Activated CD4-positive, alpha-beta memory T cell treated with anti-CD3 and anti-CD28 coated beads for 36 hours (primary cell): ENCODE measurements at regions of chr19 and their contacts with region 1.

Region 1: DNA sequence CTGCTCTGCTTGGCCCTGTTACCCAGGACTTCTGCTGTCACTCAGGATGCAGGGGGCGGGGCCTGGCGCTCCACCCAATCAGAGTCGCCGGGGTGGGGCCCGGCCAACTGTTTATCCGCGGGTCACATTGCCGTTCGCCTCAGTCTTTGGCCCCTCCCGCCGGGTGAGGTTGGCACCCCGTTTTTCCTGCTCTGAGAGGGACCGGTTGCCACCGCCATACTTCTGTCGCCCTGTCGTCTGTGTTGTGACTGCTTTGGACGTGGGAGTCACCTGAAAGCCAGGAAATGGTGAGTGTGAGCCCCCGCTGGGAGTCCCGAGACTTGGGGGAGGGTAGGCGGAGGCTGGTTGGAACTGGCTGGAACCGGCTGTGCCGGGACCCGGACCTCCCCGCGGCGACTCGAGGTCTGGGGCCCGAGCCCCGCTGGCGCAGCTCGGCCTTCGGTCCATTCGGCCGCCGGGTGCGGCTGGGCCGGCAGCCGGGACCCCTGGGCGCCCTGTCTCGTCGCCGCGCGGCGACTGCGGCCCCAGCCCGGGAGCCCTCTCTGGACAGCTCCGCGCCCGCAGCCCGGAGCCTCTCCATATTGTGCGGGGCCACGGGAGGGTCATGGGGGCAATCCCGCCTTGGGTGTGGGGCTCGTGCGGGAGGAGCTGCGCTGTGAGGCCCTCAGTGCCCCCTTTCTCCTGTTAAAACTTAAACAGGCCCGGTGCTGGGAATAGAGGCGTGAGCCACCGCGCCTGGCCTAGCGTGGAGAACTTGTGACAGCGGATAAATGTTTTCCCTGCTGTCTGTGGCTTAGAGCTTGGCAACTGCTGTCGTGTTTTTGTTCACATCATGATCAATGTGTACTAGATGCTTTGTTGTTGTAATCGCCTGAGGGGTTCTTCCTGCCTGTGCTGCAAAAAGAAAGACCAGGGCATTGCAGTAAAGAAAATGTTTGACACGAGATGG is at the start of gene ZNF844:
- DNase-seq: peak; percentile 86
- H3K4me3 Mint-ChIP-seq: peak within 1 kb of the TSS; percentile 81
- H3K27ac Mint-ChIP-seq: peak within 1 kb of the TSS; percentile 54
- H3K4me1 Mint-ChIP-seq: peaks cover 10% of the 10 kb centered on the region
- H3K27me3 Mint-ChIP-seq: peaks cover 2% of the 10 kb centered on the region
- total RNA-seq, gene ZNF844: 2.5 TPM

Region 2: DNA sequence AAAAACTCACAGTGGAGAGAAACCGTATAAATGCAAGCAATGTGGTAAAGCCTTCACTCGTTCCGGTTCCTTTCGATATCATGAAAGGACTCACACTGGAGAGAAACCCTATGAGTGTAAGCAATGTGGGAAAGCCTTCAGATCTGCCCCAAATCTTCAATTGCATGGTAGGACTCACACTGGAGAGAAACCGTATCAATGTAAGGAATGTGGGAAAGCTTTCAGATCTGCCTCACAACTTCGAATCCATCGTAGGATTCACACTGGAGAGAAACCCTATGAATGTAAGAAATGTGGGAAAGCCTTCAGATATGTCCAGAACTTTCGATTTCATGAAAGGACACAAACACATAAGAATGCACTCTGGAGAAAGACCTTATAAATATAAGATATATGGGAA is 196.7 kb before region 1 on chr19:
- CTCF ChIA-PET with region 1: no interaction called
- POLR2A ChIA-PET with region 1: no interaction called
- intact Hi-C with region 1: no loop called
- DNase-seq: no peak
- H3K4me3 Mint-ChIP-seq: no peak overlapping the region
- H3K27ac Mint-ChIP-seq: no peak overlapping the region
- H3K4me1 Mint-ChIP-seq: no peaks in the 10 kb centered on the region
- H3K27me3 Mint-ChIP-seq: no peaks in the 10 kb centered on the region

Region 3: GRCh38 chr19:11881151-11881800 is 183.6 kb before region 1 on chr19:
- CTCF ChIA-PET with region 1: interaction called, 15 read pairs
- POLR2A ChIA-PET with region 1: no interaction called
- intact Hi-C with region 1: no loop called
- DNase-seq: peak; percentile 69
- H3K4me3 Mint-ChIP-seq: no peak overlapping the region
- H3K27ac Mint-ChIP-seq: no peak overlapping the region
- H3K4me1 Mint-ChIP-seq: no peaks in the 10 kb centered on the region
- H3K27me3 Mint-ChIP-seq: no peaks in the 10 kb centered on the region

Region 4: DNA sequence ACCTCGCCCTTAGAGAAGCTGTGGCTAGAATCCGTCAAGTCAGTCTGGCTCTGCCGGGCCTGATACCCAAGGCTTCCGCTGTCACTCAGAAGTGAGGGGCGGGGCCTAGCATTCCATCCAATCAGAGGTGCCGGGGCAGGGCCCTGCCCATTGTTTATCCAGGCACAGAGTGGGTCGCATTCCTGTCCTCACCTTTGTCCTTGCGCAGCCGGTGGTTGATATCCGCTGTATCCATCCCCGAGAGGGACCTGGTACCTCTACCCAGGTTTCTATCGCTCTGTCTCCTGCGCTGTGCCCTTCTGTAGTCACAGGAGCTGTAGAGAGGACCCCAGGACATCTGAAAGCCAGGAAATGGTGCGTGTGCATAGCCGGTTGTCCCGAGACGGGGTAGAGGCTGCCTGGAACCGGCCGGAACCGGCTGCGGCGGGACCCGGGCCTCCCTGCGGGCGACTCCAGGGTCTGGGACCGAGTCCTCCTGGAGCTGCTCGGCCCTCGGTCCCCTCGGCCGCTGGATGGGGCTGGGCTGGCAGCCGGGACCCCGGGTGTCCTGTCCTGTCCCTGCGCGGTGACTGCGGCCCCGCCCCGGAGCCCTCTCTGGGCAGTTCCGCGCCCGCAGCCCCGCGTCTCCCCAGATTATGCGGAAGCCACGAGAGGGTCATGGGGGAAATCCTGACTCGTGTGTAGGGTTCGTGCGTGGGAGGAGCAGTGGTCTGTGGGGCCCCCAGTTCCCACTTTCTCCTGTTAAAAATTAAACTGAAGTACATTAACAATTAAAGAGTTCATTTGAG is 99.8 kb before region 1 on chr19 and contains the start of gene ZNF763:
- CTCF ChIA-PET with region 1: interaction called, 22 read pairs
- POLR2A ChIA-PET with region 1: no interaction called
- intact Hi-C with region 1: no loop called
- DNase-seq: peak; percentile 94
- H3K4me3 Mint-ChIP-seq: peak within 1 kb of the TSS; percentile 88
- H3K27ac Mint-ChIP-seq: peak within 1 kb of the TSS; percentile 79
- H3K4me1 Mint-ChIP-seq: peaks cover 20% of the 10 kb centered on the region
- H3K27me3 Mint-ChIP-seq: no peaks in the 10 kb centered on the region
- total RNA-seq, gene ZNF763: 0.97 to 1.6 TPM

Region 5: GRCh38 chr19:12092065-12092867 is 27.4 kb after region 1 on chr19:
- CTCF ChIA-PET with region 1: interaction called, 39 read pairs
- POLR2A ChIA-PET with region 1: interaction called, 3 read pairs
- intact Hi-C with region 1: no loop called
- DNase-seq: peak; percentile 84
- H3K4me3 Mint-ChIP-seq: peak overlapping the region; percentile 80
- H3K27ac Mint-ChIP-seq: no peak overlapping the region
- H3K4me1 Mint-ChIP-seq: peaks cover 11% of the 10 kb centered on the region
- H3K27me3 Mint-ChIP-seq: peaks cover 14% of the 10 kb centered on the region

Region 6: GRCh38 chr19:12139885-12140547 is 75.2 kb after region 1 on chr19 and contains the start of gene ZNF20:
- CTCF ChIA-PET with region 1: interaction called, 97 read pairs
- POLR2A ChIA-PET with region 1: interaction called, 4 read pairs
- intact Hi-C with region 1: loop called (anchors 1 kb)
- DNase-seq: peak; percentile 95
- H3K4me3 Mint-ChIP-seq: peak within 1 kb of the TSS; percentile 93
- H3K27ac Mint-ChIP-seq: peak within 1 kb of the TSS; percentile 70
- H3K4me1 Mint-ChIP-seq: peaks cover 36% of the 10 kb centered on the region
- H3K27me3 Mint-ChIP-seq: no peaks in the 10 kb centered on the region
- total RNA-seq, gene ZNF20: 1.5 to 2.7 TPM

Region 7: GRCh38 chr19:12162882-12163806 is 98.3 kb after region 1 on chr19 and contains the start of gene ZNF136:
- CTCF ChIA-PET with region 1: interaction called, 10 read pairs
- POLR2A ChIA-PET with region 1: no interaction called
- intact Hi-C with region 1: no loop called
- DNase-seq: peak; percentile 97
- H3K4me3 Mint-ChIP-seq: peak within 1 kb of the TSS; percentile 92
- H3K27ac Mint-ChIP-seq: peak within 1 kb of the TSS; percentile 94
- H3K4me1 Mint-ChIP-seq: peaks cover 40% of the 10 kb centered on the region
- H3K27me3 Mint-ChIP-seq: no peaks in the 10 kb centered on the region
- total RNA-seq, gene ZNF136: 9.5 to 12.8 TPM

Region 8: DNA sequence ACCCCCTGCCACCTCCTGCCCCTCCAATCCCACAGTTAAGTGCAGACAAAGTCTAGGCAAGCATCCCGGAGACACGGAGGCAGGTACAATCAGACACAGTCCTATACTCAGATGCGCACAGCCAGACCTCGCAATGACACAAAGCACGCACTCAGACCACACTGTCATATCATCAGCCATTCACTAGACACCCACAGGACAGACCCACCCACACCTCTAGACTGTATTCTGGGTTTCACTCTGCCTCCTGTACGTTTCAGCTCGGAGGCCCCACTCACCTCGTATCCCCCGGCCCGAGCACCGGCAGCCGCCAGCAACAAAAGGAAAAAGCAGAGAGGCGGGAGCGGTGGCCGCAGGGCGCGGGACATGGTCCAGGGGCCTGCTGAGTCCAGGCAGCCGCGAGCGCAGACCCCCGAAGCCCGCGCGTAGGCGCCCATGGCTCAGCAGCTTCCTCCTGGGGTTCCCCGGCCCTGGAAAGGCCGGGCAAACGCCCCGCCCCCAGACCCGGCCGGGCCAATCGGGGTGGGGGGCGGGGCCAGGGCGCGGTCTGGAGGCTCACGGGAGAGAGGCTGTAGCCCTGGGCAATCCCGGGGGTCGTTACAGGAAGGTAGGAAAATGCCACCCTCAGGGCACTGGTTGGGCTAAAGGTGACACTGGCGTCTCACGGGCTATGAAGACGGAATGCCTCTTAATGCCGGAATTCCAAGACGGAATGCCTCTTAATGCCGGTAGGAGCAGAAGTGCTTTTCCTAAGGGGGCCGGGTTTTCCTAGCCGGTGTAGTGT is 601.6 kb after region 1 on chr19 and contains the starts of genes MAN2B1 and WDR83:
- CTCF ChIA-PET with region 1: no interaction called
- POLR2A ChIA-PET with region 1: no interaction called
- intact Hi-C with region 1: loop called (anchors 5 kb)
- DNase-seq: peak; percentile 87
- H3K4me3 Mint-ChIP-seq: peak within 1 kb of the TSS; percentile 87
- H3K27ac Mint-ChIP-seq: peak within 1 kb of the TSS; percentile 87
- H3K4me1 Mint-ChIP-seq: peaks cover 47% of the 10 kb centered on the region
- H3K27me3 Mint-ChIP-seq: no peaks in the 10 kb centered on the region
- total RNA-seq, gene MAN2B1: 123 to 127 TPM
- total RNA-seq, gene WDR83: 17.1 to 17.8 TPM